A549 (cell line): ENCODE measurements at regions of chr7 and their contacts with region 1.

Region 1: GRCh38 chr7:141975806-141976523 is 2.4 kb upstream of the TAS2R38 start:
- DNase-seq: peak; percentile 77 to 79
- ATAC-seq: peak; percentile 93 to 98
- H3K4me3 ChIP-seq: peak overlapping the region; percentile 43
- H3K27ac ChIP-seq: peak overlapping the region; percentile 55 to 76
- H3K4me1 ChIP-seq: no peaks in the 10 kb centered on the region
- CTCF ChIP-seq: peak; percentile 98
- EP300 ChIP-seq: no peak
- POLR2A ChIP-seq: no peak
- RAD21 ChIP-seq: peak; percentile 98

Region 2: DNA sequence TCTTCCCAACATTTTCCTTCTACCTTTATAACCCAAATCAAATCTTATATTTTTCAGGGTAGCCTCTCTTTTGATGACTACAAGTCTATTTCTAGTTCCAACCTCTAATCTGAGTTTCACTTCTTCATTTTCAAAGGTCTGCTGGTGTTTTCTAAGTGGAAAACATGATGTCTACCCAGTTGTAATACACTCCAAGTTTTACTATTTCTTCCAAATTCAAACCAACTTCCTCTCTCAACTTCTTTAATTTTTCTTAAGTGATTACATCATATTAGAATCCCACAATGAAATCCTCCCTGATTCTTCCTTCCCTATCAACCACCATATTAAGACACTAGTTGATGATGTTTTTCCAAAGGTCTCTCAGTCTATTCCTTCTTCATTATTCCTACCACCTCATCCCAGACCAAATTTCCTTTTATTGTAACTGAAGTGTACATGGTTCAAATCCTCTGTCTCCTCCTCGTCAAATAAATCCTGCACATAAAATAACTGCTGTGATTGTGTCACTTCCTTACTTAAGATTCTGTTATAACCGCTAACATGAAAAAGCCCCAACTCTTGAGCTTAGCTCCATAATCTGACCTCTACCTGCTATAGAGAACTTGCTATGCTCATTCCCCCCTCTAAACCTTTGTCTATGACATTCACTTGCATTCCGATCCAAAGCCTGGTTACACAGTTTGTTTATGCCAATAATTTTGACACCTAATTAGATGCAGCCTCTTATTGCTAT is 15.1 kb before region 1 on chr7:
- CTCF ChIA-PET with region 1: interaction called, 24 read pairs
- POLR2A ChIA-PET with region 1: no interaction called
- DNase-seq: no peak
- ATAC-seq: no peak
- H3K4me3 ChIP-seq: no peak overlapping the region
- H3K27ac ChIP-seq: no peak overlapping the region
- H3K4me1 ChIP-seq: no peaks in the 10 kb centered on the region
- CTCF ChIP-seq: no peak
- EP300 ChIP-seq: no peak
- POLR2A ChIP-seq: no peak
- RAD21 ChIP-seq: no peak

Region 3: DNA sequence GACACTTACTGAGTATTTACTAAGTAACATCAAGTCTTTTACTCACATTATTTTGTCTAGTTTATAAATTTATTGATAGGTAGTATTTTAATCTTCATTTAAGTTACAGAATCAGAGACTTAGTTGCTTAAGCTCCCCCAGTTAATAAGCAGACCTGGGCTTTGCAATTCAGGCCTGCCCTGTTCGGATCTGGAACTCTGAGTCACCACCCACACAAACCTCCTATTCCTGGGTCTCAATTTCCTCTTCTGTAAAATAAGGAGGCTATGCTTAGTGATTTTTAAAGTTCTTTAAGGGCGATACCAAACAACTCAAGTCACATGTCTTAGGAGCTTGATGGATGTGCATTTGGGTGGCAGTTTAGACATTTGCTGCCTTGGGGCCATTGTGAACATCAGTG is 16.2 kb after region 1 on chr7:
- CTCF ChIA-PET with region 1: interaction called, 11 read pairs
- POLR2A ChIA-PET with region 1: no interaction called
- DNase-seq: no peak
- ATAC-seq: no peak
- H3K4me3 ChIP-seq: no peak overlapping the region
- H3K27ac ChIP-seq: no peak overlapping the region
- H3K4me1 ChIP-seq: no peaks in the 10 kb centered on the region
- CTCF ChIP-seq: no peak
- EP300 ChIP-seq: no peak
- POLR2A ChIP-seq: no peak
- RAD21 ChIP-seq: no peak

Region 4: GRCh38 chr7:142024547-142024946 is 48.6 kb after region 1 on chr7:
- CTCF ChIA-PET with region 1: interaction called, 18 read pairs
- POLR2A ChIA-PET with region 1: no interaction called
- DNase-seq: no peak
- ATAC-seq: no peak
- H3K4me3 ChIP-seq: no peak overlapping the region
- H3K27ac ChIP-seq: no peak overlapping the region
- H3K4me1 ChIP-seq: 0 out of 3 replicates have a peak, but pooled peaks cover 7% of the 10 kb centered on the region
- CTCF ChIP-seq: no peak
- EP300 ChIP-seq: no peak
- POLR2A ChIP-seq: no peak
- RAD21 ChIP-seq: no peak

Region 5: DNA sequence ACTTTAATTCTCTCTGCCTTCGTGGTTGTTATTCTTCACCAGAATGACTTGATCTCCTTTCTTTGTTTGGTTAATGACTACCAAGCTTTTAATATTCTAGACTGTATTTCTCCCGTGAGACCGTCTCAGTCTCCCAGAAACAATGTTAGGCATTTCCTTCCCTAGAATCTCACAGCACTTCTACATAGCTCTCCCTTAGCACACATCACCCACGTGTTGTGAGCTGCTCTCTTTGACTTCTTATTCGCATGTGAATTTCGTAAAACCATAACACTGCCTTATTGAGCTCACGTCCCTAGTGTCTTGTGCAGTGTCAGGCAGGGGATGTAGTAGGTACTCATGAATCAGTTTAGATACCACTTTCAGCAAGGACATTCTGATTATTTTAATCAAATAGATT is 78.0 kb after region 1 on chr7:
- CTCF ChIA-PET with region 1: no interaction called
- POLR2A ChIA-PET with region 1: no interaction called
- DNase-seq: no peak
- ATAC-seq: no peak
- H3K4me3 ChIP-seq: no peak overlapping the region
- H3K27ac ChIP-seq: no peak overlapping the region
- H3K4me1 ChIP-seq: no peaks in the 10 kb centered on the region
- CTCF ChIP-seq: no peak
- EP300 ChIP-seq: no peak
- POLR2A ChIP-seq: no peak
- RAD21 ChIP-seq: no peak

Region 6: GRCh38 chr7:142188846-142189245 is 212.9 kb after region 1 on chr7:
- CTCF ChIA-PET with region 1: interaction called, 54 read pairs
- POLR2A ChIA-PET with region 1: no interaction called
- DNase-seq: peak; percentile 7 to 54
- ATAC-seq: peak in 1 of 2 experiments; percentile 65; a peak in 3 of 6 replicates
- H3K4me3 ChIP-seq: no peak overlapping the region
- H3K27ac ChIP-seq: no peak overlapping the region
- H3K4me1 ChIP-seq: 0 out of 3 replicates have a peak, but pooled peaks cover 10% of the 10 kb centered on the region
- CTCF ChIP-seq: peak; percentile 74
- EP300 ChIP-seq: no peak
- POLR2A ChIP-seq: no peak
- RAD21 ChIP-seq: peak; percentile 84 to 92